Activated T-helper 1 cell treated with anti-CD3 and anti-CD28 coated beads, Interleukin-12 subunit alpha, Interleukin-12 subunit beta, Interleukin-2, Interleukin-4 antibody, amounts not matched to agents 30 ng/mL and 10 ng/mL and 1 ng/mL, durations not matched to agents 14 hours and 24 hours and 36 hours (primary cell): ENCODE measurements at regions of chr4 and their contacts with region 1.

Region 1: DNA sequence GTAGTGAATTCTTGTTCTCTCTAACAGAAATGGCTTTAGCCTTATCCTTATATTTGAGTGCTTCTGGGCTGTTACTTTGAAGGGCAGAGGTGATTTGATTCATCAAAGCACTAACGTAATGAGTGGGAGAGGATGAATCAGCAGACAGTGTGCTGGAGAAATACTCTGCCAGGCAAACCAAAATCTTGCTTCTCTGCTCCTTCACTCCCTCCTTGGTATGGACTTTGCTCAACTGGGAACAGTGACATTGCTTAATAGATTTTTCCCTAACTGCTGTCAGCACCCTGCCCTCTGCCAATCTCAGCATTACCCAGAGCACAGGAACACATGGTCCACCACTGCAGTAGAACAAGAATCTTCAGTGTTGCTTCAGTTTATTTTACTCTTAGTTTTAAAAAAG is 56.0 kb downstream of the PDLIM5 start:
- DNase-seq: no peak
- H3K4me3 Mint-ChIP-seq: no peak overlapping the region
- H3K27ac Mint-ChIP-seq: no peak overlapping the region
- H3K4me1 Mint-ChIP-seq: peaks cover 10% of the 10 kb centered on the region
- H3K27me3 Mint-ChIP-seq: no peaks in the 10 kb centered on the region

Region 2: DNA sequence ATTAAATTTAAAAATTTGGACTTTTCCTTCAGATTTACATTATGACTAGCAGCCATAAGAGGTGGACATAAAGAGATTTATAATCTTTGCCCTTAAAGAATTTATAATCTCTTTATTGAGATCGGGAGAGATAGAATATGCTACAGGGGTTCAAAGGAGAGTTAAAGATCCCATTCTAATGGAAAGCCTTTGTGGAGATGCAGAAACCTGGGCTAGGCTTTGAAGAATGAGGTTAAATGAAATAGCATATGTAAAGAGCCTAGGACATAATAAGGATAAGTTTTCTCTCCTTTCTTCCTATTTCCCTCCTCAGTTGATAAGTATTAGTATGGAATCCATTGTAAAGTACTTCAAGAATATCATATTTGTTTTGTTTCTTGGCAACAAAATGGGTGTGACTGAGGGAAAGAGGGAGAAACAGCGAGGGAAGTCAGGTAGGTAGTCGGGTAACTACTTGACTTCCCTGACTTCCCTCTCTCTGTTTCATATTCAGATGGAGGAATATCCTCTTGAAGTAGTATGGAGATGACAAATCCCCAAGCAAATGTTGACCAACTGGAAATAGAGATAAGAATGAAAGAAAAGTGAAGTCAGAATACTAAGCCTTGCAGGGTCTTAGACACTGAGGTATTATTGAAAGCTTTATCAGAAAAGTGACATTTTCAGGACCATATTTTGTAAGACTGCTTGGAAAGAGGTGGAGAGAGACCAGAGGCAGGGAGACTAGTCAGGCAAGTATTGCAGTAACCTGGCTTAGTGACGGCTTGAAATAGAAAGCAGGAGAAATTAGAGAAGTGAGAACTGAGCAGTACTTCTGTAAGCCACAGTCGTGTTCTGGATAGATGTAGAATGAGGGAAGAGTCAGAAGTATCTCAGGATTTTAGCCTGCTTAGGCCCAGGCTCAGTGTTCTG is 26.9 kb after region 1 on chr4:
- intact Hi-C with region 1: no loop called
- DNase-seq: no peak
- H3K4me3 Mint-ChIP-seq: no peak overlapping the region
- H3K27ac Mint-ChIP-seq: no peak overlapping the region
- H3K4me1 Mint-ChIP-seq: no peaks in the 10 kb centered on the region
- H3K27me3 Mint-ChIP-seq: peaks cover 2% of the 10 kb centered on the region

Region 3: DNA sequence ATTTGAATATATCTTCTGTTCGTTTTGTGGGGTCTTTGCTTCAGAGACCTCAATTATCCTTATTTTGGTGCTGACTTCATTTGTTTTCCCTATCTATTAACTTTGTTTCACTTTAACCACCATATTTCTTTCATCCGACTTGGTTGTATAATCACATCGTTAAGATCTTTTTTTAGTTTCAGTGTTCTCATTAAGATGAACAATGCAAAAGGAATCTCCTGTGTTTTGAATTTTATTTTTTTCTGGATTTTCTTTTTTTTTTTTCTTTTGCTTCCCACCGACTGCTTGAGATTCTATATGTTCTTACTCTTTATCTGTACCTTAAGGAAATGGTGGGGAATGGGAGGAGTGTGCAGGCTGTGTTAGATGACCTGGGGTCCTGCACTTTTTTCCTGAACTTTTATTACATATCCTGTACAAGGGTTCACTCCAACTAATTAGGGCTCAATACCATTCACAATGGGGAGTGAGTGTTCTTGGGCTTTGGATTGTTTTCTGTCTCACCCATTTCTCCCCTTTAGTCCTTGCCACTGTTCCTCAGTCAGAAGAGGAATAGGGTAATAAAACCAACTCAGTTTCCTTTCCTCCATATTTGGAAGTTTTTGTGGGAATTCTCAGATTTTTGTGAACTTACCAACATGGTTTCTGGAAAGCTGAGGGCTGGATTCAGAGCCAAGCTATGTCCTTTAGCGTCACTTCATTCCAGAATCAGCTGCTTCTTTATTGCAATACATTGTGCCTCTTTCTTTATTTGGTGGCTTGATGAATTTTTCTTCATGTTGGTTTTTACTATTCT is 206.9 kb after region 1 on chr4:
- intact Hi-C with region 1: no loop called
- DNase-seq: no peak
- H3K4me3 Mint-ChIP-seq: no peak overlapping the region
- H3K27ac Mint-ChIP-seq: no peak overlapping the region
- H3K4me1 Mint-ChIP-seq: no peaks in the 10 kb centered on the region
- H3K27me3 Mint-ChIP-seq: no peaks in the 10 kb centered on the region

Region 4: DNA sequence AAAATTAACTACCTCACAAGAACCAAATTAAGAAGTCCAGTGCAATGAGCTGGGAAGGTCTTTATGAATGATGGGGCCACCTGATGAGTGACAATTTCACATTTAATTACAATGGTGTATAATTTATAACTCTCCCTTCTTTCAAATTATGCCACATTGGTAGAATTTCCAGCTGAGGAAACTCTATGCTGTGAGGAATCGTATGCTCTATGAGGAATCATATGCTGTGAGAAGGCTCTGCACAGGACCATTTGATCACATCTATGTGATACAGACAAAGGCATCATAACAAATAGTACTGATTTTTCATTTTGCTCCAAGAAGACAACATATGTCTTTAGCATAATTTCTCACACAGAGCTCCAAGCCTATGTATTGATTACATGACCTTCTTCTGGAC is 1401.5 kb after region 1 on chr4:
- intact Hi-C with region 1: loop called (anchors 10 kb)
- DNase-seq: no peak
- H3K4me3 Mint-ChIP-seq: no peak overlapping the region
- H3K27ac Mint-ChIP-seq: no peak overlapping the region
- H3K4me1 Mint-ChIP-seq: no peaks in the 10 kb centered on the region
- H3K27me3 Mint-ChIP-seq: no peaks in the 10 kb centered on the region